CD14-positive monocyte (primary cell): ENCODE measurements at regions of chr19 and their contacts with region 1.

Region 1: GRCh38 chr19:54281007-54281728 is at the start of gene LILRB2:
- DNase-seq: peak; percentile 51 to 79 (median 73)
- H3K4me3 ChIP-seq: peak within 1 kb of the TSS; percentile 57 to 90 (median 72)
- H3K4me3 Mint-ChIP-seq: peak within 1 kb of the TSS; percentile 99
- H3K27ac ChIP-seq: peak within 1 kb of the TSS; percentile 79 to 94
- H3K27ac Mint-ChIP-seq: peak within 1 kb of the TSS; percentile 95 to 100 (median 99)
- H3K4me1 ChIP-seq: peaks cover 79 to 91% of the 10 kb centered on the region in 2 donors
- H3K4me1 Mint-ChIP-seq: peaks cover 89% of the 10 kb centered on the region
- H3K27me3 ChIP-seq: no peaks in the 10 kb centered on the region
- H3K27me3 Mint-ChIP-seq: peaks cover 0 to 2% (median 1%) of the 10 kb centered on the region in 3 donors
- CTCF ChIP-seq: no peak
- polyA plus RNA-seq, gene LILRB2: 111 to 574 (median 172) TPM

Region 2: DNA sequence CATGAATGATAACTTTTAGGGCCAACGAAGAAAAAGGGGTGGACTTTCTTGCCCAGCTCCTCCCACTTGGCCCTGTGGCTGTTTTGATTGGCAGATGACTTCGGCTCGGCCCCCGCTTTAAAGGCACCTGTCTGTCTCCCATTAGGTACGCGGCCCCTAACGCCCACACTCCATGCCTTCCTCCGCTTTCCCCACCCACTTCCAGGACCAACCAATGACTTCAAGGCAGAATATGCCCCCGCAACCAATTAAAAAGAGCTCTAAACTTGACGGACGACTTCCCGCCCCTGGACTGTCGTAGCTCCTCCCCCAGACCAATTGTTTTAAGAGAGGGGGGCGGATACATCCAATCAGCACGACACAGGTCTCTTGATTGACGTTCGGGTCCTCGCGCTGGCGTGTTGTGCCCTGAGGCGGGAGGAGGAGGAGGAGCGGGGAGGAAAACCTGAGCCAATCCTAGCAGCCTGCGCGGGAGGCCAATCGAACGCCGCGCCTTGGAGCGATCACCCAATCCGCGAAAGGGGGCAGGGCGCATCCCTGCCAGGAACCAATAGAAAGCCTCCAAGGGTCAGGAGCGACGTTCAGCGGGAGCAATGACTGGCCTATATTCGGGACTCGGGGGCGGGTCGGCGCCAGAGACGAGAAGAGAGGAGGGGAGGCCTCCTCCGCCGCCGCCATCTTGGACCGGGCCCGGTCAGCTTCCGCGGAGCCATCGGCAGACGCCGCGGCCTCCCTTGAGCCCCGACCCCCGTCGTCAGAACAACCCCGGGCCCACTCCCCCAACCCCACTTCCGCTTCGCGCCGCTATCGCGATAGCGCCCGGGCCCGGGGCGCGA is 143.9 kb before region 1 on chr19 and contains the start of gene CNOT3:
- intact Hi-C with region 1: no loop called
- DNase-seq: peak; percentile 100
- H3K4me3 ChIP-seq: peak within 1 kb of the TSS; percentile 66 to 92 (median 87)
- H3K4me3 Mint-ChIP-seq: peak within 1 kb of the TSS; percentile 82 to 93
- H3K27ac ChIP-seq: peak within 1 kb of the TSS; percentile 21 to 91
- H3K27ac Mint-ChIP-seq: peak within 1 kb of the TSS; percentile 82 to 95 (median 94)
- H3K4me1 ChIP-seq: peaks cover 28 to 39% of the 10 kb centered on the region in 2 donors
- H3K4me1 Mint-ChIP-seq: peaks cover 38% of the 10 kb centered on the region
- H3K27me3 ChIP-seq: peaks cover 0 to 3% of the 10 kb centered on the region in 2 donors
- H3K27me3 Mint-ChIP-seq: peaks cover 2 to 12% (median 2%) of the 10 kb centered on the region in 3 donors
- CTCF ChIP-seq: no peak
- polyA plus RNA-seq, gene CNOT3: 3.0 to 22.5 (median 4.2) TPM

Region 3: GRCh38 chr19:54266133-54266532 is 15.0 kb before region 1 on chr19:
- intact Hi-C with region 1: loop called in 1 of 2 experiments (anchors 2 kb)
- DNase-seq: peak; percentile 71 to 81 (median 77)
- H3K4me3 ChIP-seq: no peak overlapping the region
- H3K4me3 Mint-ChIP-seq: peak overlapping the region in 1 of 2 donors; percentile 20
- H3K27ac ChIP-seq: no peak overlapping the region
- H3K27ac Mint-ChIP-seq: peak overlapping the region in 3 of 7 donors; percentile 30 to 84 (median 48)
- H3K4me1 ChIP-seq: peaks cover 35 to 53% of the 10 kb centered on the region in 2 donors
- H3K4me1 Mint-ChIP-seq: peaks cover 39% of the 10 kb centered on the region
- H3K27me3 ChIP-seq: no peaks in the 10 kb centered on the region
- H3K27me3 Mint-ChIP-seq: peaks cover 0 to 2% (median 0%) of the 10 kb centered on the region in 3 donors
- CTCF ChIP-seq: peak; percentile 88

Region 4: DNA sequence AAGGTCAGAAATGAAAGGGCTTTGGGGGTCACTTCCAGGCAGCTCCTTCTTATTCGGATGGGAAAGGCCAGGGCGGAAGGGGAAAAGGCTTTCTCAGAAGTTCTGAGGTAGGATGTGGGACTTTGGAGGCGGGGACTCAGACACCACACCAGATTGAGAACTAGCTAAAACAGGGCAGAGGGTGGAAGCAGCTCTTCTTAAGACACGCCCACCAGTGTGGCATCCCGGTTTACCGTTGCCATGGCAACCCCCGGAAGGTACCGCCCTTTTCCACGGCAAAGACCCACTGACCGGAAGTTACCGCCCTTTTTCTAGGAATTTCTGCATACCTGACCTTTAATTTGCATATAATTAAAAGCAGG is 35.6 kb after region 1 on chr19:
- intact Hi-C with region 1: loop called (anchors 5 kb)
- DNase-seq: peak; percentile 70 to 77 (median 73)
- H3K4me3 ChIP-seq: peak overlapping the region in 1 of 3 experiments; percentile 62
- H3K4me3 Mint-ChIP-seq: peak overlapping the region; percentile 61 to 80
- H3K27ac ChIP-seq: peak overlapping the region; percentile 82 to 88
- H3K27ac Mint-ChIP-seq: peak overlapping the region; percentile 95 to 99 (median 98)
- H3K4me1 ChIP-seq: peaks cover 66 to 70% of the 10 kb centered on the region in 2 donors
- H3K4me1 Mint-ChIP-seq: peaks cover 65% of the 10 kb centered on the region
- H3K27me3 ChIP-seq: no peaks in the 10 kb centered on the region
- H3K27me3 Mint-ChIP-seq: peaks cover 3 to 8% (median 4%) of the 10 kb centered on the region in 3 donors
- CTCF ChIP-seq: no peak

Region 5: DNA sequence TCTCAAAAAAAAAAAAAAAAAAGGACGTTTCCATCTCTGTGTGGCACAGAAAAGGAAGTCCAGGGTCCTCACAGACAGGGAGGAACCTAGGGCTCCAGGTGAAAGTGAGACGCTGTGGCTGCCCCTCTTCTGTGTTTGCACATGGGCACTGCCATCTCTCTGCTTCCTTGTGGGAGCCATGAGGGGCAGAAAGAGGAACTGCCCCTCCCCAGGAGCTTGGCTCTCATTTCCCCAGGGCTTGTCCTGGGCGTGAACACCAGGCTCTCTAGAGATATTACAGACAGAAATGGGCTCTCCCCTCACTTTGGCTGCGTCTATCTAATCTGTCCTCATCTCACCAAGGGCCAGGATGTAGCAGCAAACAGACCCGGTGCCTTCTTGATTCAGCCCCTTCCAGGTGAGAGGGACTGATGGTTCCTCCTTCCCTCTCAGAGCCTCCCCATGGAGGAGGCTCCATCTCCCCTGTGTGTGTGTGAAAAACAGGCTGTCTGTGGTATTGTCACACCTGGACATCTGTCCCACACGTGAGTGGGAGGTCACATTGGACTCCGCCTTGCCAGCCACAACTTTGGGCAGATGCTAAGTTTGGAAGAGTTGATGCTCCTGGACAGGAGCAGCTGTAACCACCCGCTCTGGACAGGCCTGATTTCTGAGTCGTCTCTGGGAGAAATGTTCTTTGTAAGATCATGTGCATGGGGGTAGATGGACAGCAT is 58.6 kb after region 1 on chr19:
- intact Hi-C with region 1: loop called in 1 of 2 experiments (anchors 10 kb)
- DNase-seq: peak; percentile 58 to 70 (median 67)
- H3K4me3 ChIP-seq: peak overlapping the region in 1 of 3 experiments; percentile 14
- H3K4me3 Mint-ChIP-seq: peak overlapping the region; percentile 53 to 68
- H3K27ac ChIP-seq: no peak overlapping the region
- H3K27ac Mint-ChIP-seq: peak overlapping the region in 6 of 7 donors; percentile 34 to 85 (median 65)
- H3K4me1 ChIP-seq: peaks cover 41 to 46% of the 10 kb centered on the region in 2 donors
- H3K4me1 Mint-ChIP-seq: peaks cover 51% of the 10 kb centered on the region
- H3K27me3 ChIP-seq: no peaks in the 10 kb centered on the region
- H3K27me3 Mint-ChIP-seq: peaks cover 0 to 5% (median 2%) of the 10 kb centered on the region in 3 donors
- CTCF ChIP-seq: no peak

Region 6: GRCh38 chr19:54594737-54595136 is 313.6 kb after region 1 on chr19:
- intact Hi-C with region 1: no loop called
- DNase-seq: no peak
- H3K4me3 ChIP-seq: peak overlapping the region; percentile 82 to 93 (median 88)
- H3K4me3 Mint-ChIP-seq: peak overlapping the region; percentile 98 to 100
- H3K27ac ChIP-seq: peak overlapping the region; percentile 85 to 88
- H3K27ac Mint-ChIP-seq: peak overlapping the region in 6 of 7 donors; percentile 69 to 98 (median 96)
- H3K4me1 ChIP-seq: peaks cover 33 to 52% of the 10 kb centered on the region in 2 donors
- H3K4me1 Mint-ChIP-seq: peaks cover 66% of the 10 kb centered on the region
- H3K27me3 ChIP-seq: no peaks in the 10 kb centered on the region
- H3K27me3 Mint-ChIP-seq: peaks cover 0 to 3% (median 2%) of the 10 kb centered on the region in 3 donors
- CTCF ChIP-seq: no peak